ENCODE measurements at regions of chr5 and their contacts with region 1.

Region 1: DNA sequence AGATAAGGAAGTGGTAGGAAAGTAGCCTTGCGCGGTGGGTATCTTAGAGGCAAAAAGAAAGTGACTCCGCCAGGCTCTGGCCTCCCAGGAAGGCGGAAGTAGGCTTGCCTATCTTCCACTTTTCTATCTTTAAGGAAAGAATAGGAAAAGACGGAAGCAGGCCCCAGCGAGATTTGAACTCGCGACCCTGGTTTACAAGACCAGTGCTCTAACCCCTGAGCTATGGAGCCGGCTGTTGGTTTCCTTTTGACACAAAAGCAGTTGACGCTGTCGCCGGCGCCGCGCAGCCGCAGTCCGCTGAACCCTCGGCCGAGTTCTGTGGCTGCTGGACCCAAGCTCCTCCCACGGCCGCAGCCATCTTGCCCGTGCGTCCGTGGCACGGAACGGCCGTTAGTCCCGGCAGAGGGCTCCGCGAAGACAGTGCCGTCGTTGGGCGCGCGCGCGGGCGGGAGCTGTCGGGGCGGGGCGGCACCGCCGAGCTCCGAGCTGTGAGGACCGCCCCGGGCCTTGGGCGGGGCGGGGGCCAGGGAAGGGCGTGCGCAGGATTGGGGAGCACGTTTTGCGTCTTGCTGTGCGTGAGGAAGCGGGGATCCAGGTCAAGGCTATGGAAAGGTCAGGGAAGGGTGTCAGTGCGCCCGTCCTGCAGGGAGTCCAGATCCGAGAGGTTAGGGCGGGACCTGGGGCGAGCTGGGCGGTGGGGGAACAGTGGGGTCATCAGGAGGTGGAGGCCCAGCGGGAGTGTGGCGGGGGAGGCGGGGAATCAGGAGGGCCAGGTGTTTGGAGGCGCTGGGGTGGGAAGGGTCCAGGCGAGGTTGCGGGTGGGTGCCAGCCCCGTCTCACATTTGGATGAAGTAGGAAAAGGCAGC is 13.2 kb downstream of the TRIM7 start:
- DNase-seq: peak; percentile 96
- ATAC-seq: peak; percentile 68
- H3K4me3 Mint-ChIP-seq: peak overlapping the region; percentile 88
- H3K27ac Mint-ChIP-seq: peak overlapping the region; percentile 97
- H3K4me1 Mint-ChIP-seq: peaks cover 29% of the 10 kb centered on the region
- H3K27me3 Mint-ChIP-seq: no peaks in the 10 kb centered on the region

Region 2: DNA sequence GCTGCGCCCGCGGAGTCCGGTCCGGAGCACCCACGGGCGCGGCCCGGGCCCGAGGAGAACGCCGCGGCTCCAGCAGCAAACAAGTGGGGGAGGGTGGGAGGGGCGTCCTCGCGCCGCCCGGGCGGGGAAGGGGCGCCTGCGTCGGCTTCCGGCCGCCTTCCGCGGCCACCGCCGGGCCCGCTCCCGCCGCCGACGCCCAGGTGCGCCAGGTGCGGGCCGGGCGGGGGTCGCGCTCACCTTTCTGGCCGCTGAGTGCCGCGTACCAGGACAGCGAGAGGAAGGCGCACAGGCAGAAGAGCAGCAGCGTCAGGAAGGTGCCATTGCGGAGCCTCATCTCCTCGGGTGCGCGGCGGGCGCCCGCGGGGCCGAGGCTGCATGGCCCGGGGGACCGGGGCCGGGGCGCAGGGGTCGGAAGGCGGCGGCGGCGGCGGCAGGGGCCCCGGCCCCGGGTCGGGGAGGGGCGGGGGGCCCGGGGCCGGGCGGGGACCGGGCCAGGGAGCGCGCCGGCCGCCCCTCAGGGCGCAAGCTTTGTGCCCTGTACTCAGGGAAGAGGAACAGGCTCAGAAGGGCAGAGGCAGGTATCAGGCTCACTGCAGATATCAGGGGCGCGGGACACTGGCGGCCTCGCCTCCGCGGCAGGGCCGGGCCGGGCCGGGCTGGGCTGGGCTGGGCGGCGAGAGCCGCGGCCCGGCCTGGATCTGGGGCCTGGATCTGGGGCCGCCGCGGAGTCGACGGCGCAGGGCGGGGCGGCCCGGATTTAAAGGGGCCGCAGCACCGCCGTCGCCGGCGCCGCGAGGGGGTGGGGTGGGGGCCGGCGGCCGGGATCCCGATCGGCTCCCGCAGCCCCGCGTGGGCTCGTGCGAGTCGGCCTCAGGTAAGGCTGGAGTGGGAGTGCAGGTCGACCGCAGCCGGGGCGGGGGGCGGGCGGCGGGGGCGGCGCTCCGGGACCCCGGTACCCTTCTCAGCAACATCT is 1385.2 kb before region 1 on chr5 and contains the start of gene MGAT4B:
- CTCF ChIA-PET with region 1: no interaction called
- POLR2A ChIA-PET with region 1: no interaction called
- intact Hi-C with region 1: no loop called
- DNase-seq: peak; percentile 82
- ATAC-seq: peak; percentile 65
- H3K4me3 Mint-ChIP-seq: peak within 1 kb of the TSS; percentile 82
- H3K27ac Mint-ChIP-seq: peak within 1 kb of the TSS; percentile 25
- H3K4me1 Mint-ChIP-seq: peaks cover 36% of the 10 kb centered on the region
- H3K27me3 Mint-ChIP-seq: no peaks in the 10 kb centered on the region
- total RNA-seq, gene MGAT4B: 52.4 to 62.8 TPM

Region 3: DNA sequence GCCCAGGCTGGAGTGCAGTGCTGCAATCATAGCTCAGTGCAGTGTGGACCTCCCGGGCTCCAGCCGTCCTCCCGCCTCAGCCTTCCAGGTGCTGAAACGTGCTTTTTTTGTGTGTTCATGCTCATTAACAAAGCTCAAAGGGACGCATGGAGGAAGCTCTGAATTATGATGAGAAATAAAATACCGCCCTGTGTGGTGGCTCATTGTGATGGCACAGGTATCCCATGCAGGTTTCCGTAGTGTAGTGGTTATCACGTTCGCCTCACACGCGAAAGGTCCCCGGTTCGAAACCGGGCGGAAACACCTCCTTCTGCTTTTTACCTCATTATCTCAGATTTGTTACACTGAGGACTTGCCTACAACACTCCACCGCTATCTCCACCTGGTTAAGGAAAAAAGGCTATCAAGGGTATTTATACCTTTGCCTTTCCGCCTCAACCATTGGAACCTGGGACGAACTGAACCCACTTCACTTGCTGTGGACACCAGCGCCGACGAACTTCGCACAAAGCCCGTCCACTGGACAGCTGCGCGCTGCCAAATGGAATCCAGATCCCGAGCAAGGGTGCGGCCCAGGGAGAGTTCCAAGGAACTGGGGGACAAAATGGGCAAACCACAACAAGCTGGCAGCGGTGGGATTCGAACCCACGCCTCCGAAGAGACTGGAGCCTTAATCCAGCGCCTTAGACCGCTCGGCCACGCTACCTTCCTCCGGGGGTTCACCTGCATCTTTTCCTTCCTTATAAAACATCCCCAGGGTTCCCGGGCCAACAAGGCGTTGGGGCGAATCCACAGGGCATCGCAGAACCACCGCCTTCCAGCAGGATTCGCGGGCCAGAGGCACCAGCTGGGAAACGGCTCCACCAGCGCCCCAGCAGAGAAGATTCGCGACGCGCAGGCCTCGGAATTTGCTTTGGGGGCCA is 18.1 kb before region 1 on chr5:
- CTCF ChIA-PET with region 1: interaction called, 18 read pairs
- POLR2A ChIA-PET with region 1: interaction called, 4 read pairs
- intact Hi-C with region 1: loop called (anchors 1 to 2 kb)
- DNase-seq: peak; percentile 86
- ATAC-seq: peak; percentile 80
- H3K4me3 Mint-ChIP-seq: peak overlapping the region; percentile 77
- H3K27ac Mint-ChIP-seq: peak overlapping the region; percentile 94
- H3K4me1 Mint-ChIP-seq: peaks cover 47% of the 10 kb centered on the region
- H3K27me3 Mint-ChIP-seq: peaks cover 19% of the 10 kb centered on the region

Region 4: DNA sequence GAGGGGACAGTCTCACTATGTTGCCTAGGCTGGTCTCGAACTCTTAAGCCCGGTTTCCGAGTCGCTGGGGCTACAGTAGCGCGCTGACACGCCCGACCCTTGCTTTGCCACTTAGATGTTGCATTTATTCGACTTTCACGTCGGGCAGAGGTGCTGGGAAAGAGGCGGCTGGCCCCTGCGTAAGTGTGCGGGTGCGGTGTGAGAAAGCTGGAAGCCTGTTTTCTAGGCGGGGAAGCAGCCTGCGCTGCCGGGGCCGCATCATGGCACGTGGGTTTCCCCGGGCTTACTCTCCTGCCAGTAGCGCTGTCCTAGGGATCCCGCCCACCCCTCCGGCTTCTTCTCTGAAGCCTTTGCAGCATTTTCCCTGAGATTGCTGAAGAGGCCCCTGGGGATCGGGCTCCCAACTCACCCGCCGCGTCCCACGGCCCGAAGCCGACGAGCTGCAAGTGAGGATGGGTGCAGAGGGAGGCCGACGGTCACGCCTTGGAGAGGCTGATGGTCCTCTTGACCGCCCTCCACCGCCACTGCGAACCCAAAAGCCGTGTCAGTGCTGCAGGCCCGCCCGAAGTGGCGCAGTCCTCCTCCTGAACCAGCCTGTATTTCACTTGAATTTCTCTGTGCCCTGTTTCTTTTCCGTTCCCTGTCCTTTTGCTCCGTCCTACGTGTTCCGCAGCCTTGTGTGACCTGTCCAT is 25.5 kb after region 1 on chr5:
- CTCF ChIA-PET with region 1: interaction called, 5 read pairs
- POLR2A ChIA-PET with region 1: interaction called, 9 read pairs
- intact Hi-C with region 1: loop called (anchors 1 kb)
- DNase-seq: peak; percentile 80
- ATAC-seq: peak; percentile 10
- H3K4me3 Mint-ChIP-seq: peak overlapping the region; percentile 77
- H3K27ac Mint-ChIP-seq: peak overlapping the region; percentile 85
- H3K4me1 Mint-ChIP-seq: peaks cover 45% of the 10 kb centered on the region
- H3K27me3 Mint-ChIP-seq: no peaks in the 10 kb centered on the region

Region 5: DNA sequence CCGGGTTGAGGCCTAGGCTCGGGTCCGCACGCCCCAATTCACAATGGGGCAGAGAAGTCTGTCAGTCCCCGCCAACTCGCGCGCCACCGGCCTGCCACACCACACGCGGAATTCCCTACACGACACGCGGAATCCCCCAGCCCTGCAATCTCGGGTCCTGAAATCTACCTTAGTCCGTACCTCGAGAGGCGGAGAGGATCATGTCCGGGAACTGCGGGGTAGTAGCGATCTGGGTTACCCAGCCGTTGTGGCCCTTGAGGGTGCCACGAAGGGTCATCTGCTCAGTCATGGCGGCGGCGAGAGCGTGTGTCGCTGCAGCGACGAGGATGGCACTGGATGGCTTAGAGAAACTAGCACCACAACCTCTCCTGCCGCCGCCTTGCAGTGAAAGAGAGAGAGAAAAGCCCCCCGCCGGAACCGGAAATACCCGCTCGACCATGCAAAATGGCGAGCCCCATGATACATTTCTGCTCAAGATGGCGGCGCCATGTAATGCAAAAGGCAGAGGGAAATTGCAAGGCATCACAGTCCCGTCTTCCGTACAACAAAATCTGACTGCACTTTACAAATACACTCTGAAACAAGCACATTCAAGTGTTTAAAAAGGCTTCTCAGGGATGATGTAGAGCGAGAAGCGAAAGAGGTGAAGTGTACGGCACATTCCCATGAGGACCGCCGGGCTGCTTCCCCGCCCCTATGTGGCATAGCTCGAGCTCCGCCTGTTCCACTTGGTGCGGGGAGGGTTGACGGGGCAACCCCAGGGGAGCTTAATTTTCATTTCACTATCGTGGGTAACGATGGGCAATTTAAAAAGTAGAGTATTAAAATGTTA is 52.0 kb after region 1 on chr5 and contains the start of gene RACK1:
- CTCF ChIA-PET with region 1: interaction called, 3 read pairs
- POLR2A ChIA-PET with region 1: interaction called, 4 read pairs
- intact Hi-C with region 1: loop called (anchors 1 to 2 kb)
- DNase-seq: peak; percentile 94
- ATAC-seq: peak; percentile 70
- H3K4me3 Mint-ChIP-seq: peak within 1 kb of the TSS; percentile 91
- H3K27ac Mint-ChIP-seq: peak within 1 kb of the TSS; percentile 99
- H3K4me1 Mint-ChIP-seq: peaks cover 50% of the 10 kb centered on the region
- H3K27me3 Mint-ChIP-seq: no peaks in the 10 kb centered on the region
- total RNA-seq, gene RACK1: 2,724 to 3,901 TPM

Measured in activated CD4-positive, alpha-beta T cell treated with anti-CD3 and anti-CD28 coated beads for 36 hours (primary cell).